ENCODE measurements at regions of chr11 and their contacts with region 1.

Region 1: DNA sequence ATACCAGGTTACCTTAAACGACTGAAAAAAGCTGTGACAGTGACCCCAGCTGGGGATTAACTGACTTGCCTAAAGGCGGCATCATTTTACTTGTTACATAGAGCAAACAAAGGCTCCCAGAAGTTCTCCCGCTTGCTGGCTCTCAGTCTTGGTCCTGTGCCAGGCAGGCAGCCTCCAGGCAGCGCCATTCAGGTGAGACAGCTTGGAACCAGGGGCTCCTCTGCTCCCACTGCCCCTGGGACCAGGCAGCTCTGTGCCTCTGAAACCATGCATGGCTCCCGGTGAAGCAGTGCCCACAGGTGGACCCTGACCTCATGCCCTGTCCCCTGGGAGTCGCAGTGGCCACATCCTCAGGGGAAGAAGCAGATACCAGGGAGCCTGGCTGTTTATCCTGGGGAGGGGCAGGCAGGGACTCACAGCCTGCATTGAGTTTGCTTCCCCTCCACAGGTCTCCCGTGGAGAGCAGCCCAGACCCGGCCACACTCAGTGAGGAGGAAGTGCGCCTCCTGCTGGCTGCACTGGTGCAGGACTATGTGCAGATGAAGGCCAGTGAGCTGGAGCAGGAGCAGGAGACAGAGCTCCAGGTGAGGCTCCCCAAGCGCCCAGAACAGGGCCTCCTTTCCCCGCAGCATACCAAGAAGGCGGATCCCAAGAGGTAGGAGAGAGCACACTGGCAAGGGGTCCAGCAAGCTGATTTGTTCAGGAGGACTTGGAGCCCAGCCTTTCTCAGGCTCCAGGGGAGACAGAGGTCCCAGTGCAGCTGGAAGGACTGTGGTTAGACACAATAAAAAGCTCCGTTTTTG is 15.6 kb upstream of the CYP2R1 start:
- DNase-seq: peak; percentile 72 to 93 (median 82)
- ATAC-seq: peak; percentile 57
- H3K4me3 ChIP-seq: no peak overlapping the region
- H3K4me3 Mint-ChIP-seq: peak overlapping the region; percentile 68
- H3K27ac ChIP-seq: no peak overlapping the region
- H3K27ac Mint-ChIP-seq: peak overlapping the region; percentile 43
- H3K4me1 ChIP-seq: peaks cover 32% of the 10 kb centered on the region
- H3K4me1 Mint-ChIP-seq: peaks cover 49% of the 10 kb centered on the region
- H3K27me3 ChIP-seq: no peaks in the 10 kb centered on the region
- H3K27me3 Mint-ChIP-seq: no peaks in the 10 kb centered on the region
- CTCF ChIP-seq: peak; percentile 86

Region 2: GRCh38 chr11:13772223-13773046 is 1135.2 kb before region 1 on chr11:
- CTCF ChIA-PET with region 1: no interaction called
- POLR2A ChIA-PET with region 1: no interaction called
- intact Hi-C with region 1: loop called in 1 of 2 experiments (anchors 5 kb)
- DNase-seq: peak in 6 of 14 experiments; percentile 4 to 86 (median 66)
- ATAC-seq: peak; percentile 70
- H3K4me3 ChIP-seq: no peak overlapping the region
- H3K4me3 Mint-ChIP-seq: no peak overlapping the region
- H3K27ac ChIP-seq: no peak overlapping the region
- H3K27ac Mint-ChIP-seq: no peak overlapping the region
- H3K4me1 ChIP-seq: no peaks in the 10 kb centered on the region
- H3K4me1 Mint-ChIP-seq: no peaks in the 10 kb centered on the region
- H3K27me3 ChIP-seq: no peaks in the 10 kb centered on the region
- H3K27me3 Mint-ChIP-seq: no peaks in the 10 kb centered on the region
- CTCF ChIP-seq: peak; percentile 77

Region 3: DNA sequence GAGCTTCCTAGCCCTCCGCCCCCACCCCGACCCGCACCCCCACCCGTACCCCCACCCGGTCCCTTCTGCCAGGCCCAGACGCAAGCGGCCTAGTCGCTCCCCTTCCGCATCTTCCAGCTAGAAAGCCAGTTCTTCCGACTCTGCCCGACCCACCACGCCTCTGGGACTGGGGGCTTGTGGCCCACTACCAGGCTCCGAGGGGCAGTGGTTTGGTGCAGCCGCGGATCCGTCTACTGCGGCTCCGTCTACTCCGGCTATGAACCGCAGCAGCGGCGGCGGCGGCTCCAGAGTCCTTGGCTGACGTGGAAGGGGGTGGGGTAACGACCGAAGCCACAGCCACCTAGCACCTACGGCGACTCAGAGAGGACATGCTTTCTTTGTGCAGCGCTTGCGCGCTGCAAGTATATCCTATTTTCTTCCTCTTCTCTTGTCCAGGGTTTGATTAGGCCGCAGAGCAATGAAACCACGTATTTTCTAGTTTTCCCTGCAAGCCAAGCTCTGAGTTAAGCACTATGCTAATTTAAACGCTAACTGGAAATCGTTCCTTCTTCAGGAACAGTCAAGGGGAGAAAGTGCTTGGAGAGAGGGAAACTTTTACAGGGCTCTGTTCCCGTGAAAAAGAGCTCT is 407.9 kb before region 1 on chr11 and contains the start of gene COPB1:
- CTCF ChIA-PET with region 1: interaction called, 3 read pairs
- POLR2A ChIA-PET with region 1: interaction called, 12 read pairs
- intact Hi-C with region 1: no loop called
- DNase-seq: peak; percentile 84 to 96 (median 90)
- ATAC-seq: peak; percentile 94
- H3K4me3 ChIP-seq: peak within 1 kb of the TSS; percentile 85
- H3K4me3 Mint-ChIP-seq: peak within 1 kb of the TSS; percentile 97
- H3K27ac ChIP-seq: peak within 1 kb of the TSS; percentile 67 to 84
- H3K27ac Mint-ChIP-seq: peak within 1 kb of the TSS; percentile 92
- H3K4me1 ChIP-seq: peaks cover 6% of the 10 kb centered on the region
- H3K4me1 Mint-ChIP-seq: peaks cover 53% of the 10 kb centered on the region
- H3K27me3 ChIP-seq: no peaks in the 10 kb centered on the region
- H3K27me3 Mint-ChIP-seq: no peaks in the 10 kb centered on the region
- CTCF ChIP-seq: no peak
- total RNA-seq, gene COPB1: 93.1 to 95.9 TPM

Region 4: GRCh38 chr11:14537134-14537599 is 370.4 kb before region 1 on chr11:
- CTCF ChIA-PET with region 1: no interaction called
- POLR2A ChIA-PET with region 1: no interaction called
- intact Hi-C with region 1: loop called (anchors 1 kb)
- DNase-seq: peak in 13 of 14 experiments; percentile 11 to 75 (median 37)
- ATAC-seq: peak; percentile 94
- H3K4me3 ChIP-seq: peak overlapping the region; percentile 7
- H3K4me3 Mint-ChIP-seq: peak overlapping the region; percentile 63
- H3K27ac ChIP-seq: no peak overlapping the region
- H3K27ac Mint-ChIP-seq: peak overlapping the region; percentile 63
- H3K4me1 ChIP-seq: peaks cover 7% of the 10 kb centered on the region
- H3K4me1 Mint-ChIP-seq: peaks cover 39% of the 10 kb centered on the region
- H3K27me3 ChIP-seq: no peaks in the 10 kb centered on the region
- H3K27me3 Mint-ChIP-seq: no peaks in the 10 kb centered on the region
- CTCF ChIP-seq: peak; percentile 96

Region 5: DNA sequence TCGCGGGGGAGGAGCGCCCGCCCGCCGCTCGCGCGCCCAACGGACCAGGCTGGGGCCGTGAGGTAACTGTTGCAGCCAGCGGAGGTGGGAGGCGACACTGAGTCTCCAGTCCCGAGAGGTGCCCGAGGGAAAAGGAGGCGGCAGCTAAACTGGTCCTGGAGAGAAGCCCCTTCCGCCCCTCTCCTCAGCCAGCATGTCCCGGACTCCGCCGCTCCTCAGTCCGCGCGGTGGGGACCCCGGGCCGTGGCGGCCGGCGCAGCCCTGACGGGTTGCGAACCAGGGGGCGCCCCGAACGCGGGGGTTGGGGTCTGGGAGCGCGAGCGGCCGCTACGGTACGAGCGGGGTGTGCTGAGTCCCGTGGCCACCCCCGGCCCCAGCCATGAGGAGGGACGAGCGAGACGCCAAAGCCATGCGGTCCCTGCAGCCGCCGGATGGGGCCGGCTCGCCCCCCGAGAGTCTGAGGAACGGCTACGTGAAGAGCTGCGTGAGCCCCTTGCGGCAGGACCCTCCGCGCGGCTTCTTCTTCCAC is 263.9 kb before region 1 on chr11 and contains the start of gene PDE3B:
- CTCF ChIA-PET with region 1: interaction called, 6 read pairs
- POLR2A ChIA-PET with region 1: no interaction called
- intact Hi-C with region 1: loop called in 1 of 2 experiments (anchors 5 kb)
- DNase-seq: peak; percentile 39 to 89 (median 70)
- ATAC-seq: peak; percentile 59
- H3K4me3 ChIP-seq: peak within 1 kb of the TSS; percentile 91
- H3K4me3 Mint-ChIP-seq: peak within 1 kb of the TSS; percentile 96
- H3K27ac ChIP-seq: peak within 1 kb of the TSS; percentile 35 to 80
- H3K27ac Mint-ChIP-seq: peak within 1 kb of the TSS; percentile 90
- H3K4me1 ChIP-seq: peaks cover 15% of the 10 kb centered on the region
- H3K4me1 Mint-ChIP-seq: peaks cover 58% of the 10 kb centered on the region
- H3K27me3 ChIP-seq: no peaks in the 10 kb centered on the region
- H3K27me3 Mint-ChIP-seq: no peaks in the 10 kb centered on the region
- CTCF ChIP-seq: no peak
- total RNA-seq, gene PDE3B: 103 to 106 TPM

Region 6: GRCh38 chr11:14727215-14727614 is 180.4 kb before region 1 on chr11:
- CTCF ChIA-PET with region 1: no interaction called
- POLR2A ChIA-PET with region 1: no interaction called
- intact Hi-C with region 1: no loop called
- DNase-seq: no peak
- ATAC-seq: no peak
- H3K4me3 ChIP-seq: no peak overlapping the region
- H3K4me3 Mint-ChIP-seq: no peak overlapping the region
- H3K27ac ChIP-seq: no peak overlapping the region
- H3K27ac Mint-ChIP-seq: peak overlapping the region; percentile 52
- H3K4me1 ChIP-seq: no peaks in the 10 kb centered on the region
- H3K4me1 Mint-ChIP-seq: peaks cover 70% of the 10 kb centered on the region
- H3K27me3 ChIP-seq: no peaks in the 10 kb centered on the region
- H3K27me3 Mint-ChIP-seq: no peaks in the 10 kb centered on the region
- CTCF ChIP-seq: no peak

Region 7: DNA sequence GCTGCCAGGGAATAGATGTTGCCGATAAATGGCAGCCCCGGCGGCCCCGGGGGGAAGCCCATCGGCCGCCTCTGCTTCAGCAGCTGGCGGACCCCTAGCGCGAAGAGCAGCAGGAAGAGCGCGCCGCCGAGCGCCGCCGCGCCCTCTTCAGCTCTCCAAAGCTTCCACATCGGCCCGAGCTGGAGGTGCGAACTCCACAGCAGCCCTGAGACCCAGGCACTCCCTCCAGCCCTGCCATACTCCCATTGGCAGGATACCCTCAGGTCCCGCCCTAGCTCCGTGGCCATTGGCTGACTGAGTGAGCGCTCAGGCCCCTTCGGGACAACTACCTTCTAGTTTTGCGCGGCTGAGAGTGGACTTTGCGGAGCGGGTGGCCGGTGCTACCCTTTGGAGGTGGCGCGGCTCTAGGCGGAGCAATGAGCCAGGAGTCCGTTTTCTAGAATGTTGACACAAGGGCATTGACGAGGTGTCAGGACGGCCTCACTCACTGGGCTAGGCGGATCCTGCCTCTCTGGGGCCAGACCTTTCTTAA is 15.5 kb before region 1 on chr11 and contains the start of gene CYP2R1:
- CTCF ChIA-PET with region 1: interaction called, 73 read pairs
- POLR2A ChIA-PET with region 1: interaction called, 53 read pairs
- intact Hi-C with region 1: loop called in 1 of 2 experiments (anchors 1 kb)
- DNase-seq: peak; percentile 79 to 95 (median 86)
- ATAC-seq: peak; percentile 82
- H3K4me3 ChIP-seq: peak within 1 kb of the TSS; percentile 94
- H3K4me3 Mint-ChIP-seq: peak within 1 kb of the TSS; percentile 96
- H3K27ac ChIP-seq: peak within 1 kb of the TSS; percentile 81 to 88
- H3K27ac Mint-ChIP-seq: peak within 1 kb of the TSS; percentile 94
- H3K4me1 ChIP-seq: peaks cover 31% of the 10 kb centered on the region
- H3K4me1 Mint-ChIP-seq: peaks cover 35% of the 10 kb centered on the region
- H3K27me3 ChIP-seq: no peaks in the 10 kb centered on the region
- H3K27me3 Mint-ChIP-seq: no peaks in the 10 kb centered on the region
- CTCF ChIP-seq: no peak
- total RNA-seq, gene CYP2R1: 14.2 to 15.8 TPM

Region 8: GRCh38 chr11:15074206-15075161 is 166.9 kb after region 1 on chr11:
- CTCF ChIA-PET with region 1: interaction called, 25 read pairs
- POLR2A ChIA-PET with region 1: interaction called, 14 read pairs
- intact Hi-C with region 1: loop called (anchors 1 kb)
- DNase-seq: peak; percentile 71 to 88 (median 78)
- ATAC-seq: peak; percentile 93
- H3K4me3 ChIP-seq: peak overlapping the region; percentile 50
- H3K4me3 Mint-ChIP-seq: peak overlapping the region; percentile 88
- H3K27ac ChIP-seq: no peak overlapping the region
- H3K27ac Mint-ChIP-seq: no peak overlapping the region
- H3K4me1 ChIP-seq: peaks cover 25% of the 10 kb centered on the region
- H3K4me1 Mint-ChIP-seq: peaks cover 18% of the 10 kb centered on the region
- H3K27me3 ChIP-seq: peaks cover 22 to 23% of the 10 kb centered on the region in 2 experiments
- H3K27me3 Mint-ChIP-seq: peaks cover 39% of the 10 kb centered on the region
- CTCF ChIP-seq: peak; percentile 93

Measured in CD4-positive, alpha-beta T cell (primary cell).